Pancreas (tissue), 10 donors: ENCODE measurements at regions of chr3 and their contacts with region 1.

Region 1: GRCh38 chr3:153768561-153769469 is 352.4 kb upstream of the ARHGEF26 start:
- DNase-seq: peak in 4 of 6 donors; percentile 21 to 62 (median 34)
- ATAC-seq: peak; percentile 68 to 97 (median 90)
- H3K4me3 ChIP-seq: no peak overlapping the region
- H3K27ac ChIP-seq: no peak overlapping the region
- H3K4me1 ChIP-seq: no peaks in the 10 kb centered on the region
- H3K27me3 ChIP-seq: no peaks in the 10 kb centered on the region
- CTCF ChIP-seq: peak; percentile 35 to 79 (median 66)

Region 2: DNA sequence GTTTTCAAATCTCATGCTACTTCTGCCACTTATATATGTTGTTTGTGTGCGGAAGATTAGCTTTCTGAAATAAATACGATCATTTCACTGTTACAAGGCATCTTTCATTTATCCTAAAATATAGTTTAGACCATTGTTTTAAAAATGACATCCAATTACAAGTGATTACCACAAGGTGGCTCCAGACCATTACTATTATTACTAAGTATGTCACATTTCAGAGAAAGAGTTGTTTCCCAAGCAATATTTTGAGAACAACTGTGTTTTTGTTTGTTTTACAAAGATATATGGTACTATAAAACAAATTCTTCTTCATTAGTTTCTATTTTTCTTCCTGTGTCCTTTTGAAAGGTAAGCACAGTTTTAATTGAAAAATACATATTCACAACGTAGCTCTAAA is 742.8 kb before region 1 on chr3:
- intact Hi-C with region 1: loop called in 1 of 3 experiments (anchors 10 kb)
- DNase-seq: no peak
- ATAC-seq: peak in 1 of 4 donors; percentile 57
- H3K4me3 ChIP-seq: no peak overlapping the region
- H3K27ac ChIP-seq: no peak overlapping the region
- H3K4me1 ChIP-seq: no peaks in the 10 kb centered on the region
- H3K27me3 ChIP-seq: peaks cover 0 to 9% (median 0%) of the 10 kb centered on the region in 4 donors
- CTCF ChIP-seq: peak; percentile 13 to 41 (median 28)

Region 3: GRCh38 chr3:153043729-153044328 is 725.0 kb before region 1 on chr3:
- intact Hi-C with region 1: loop called in 2 of 3 experiments (anchors 5 to 10 kb)
- DNase-seq: no peak
- ATAC-seq: peak in 2 of 4 donors; percentile 42 to 43
- H3K4me3 ChIP-seq: no peak overlapping the region
- H3K27ac ChIP-seq: no peak overlapping the region
- H3K4me1 ChIP-seq: no peaks in the 10 kb centered on the region
- H3K27me3 ChIP-seq: no peaks in the 10 kb centered on the region
- CTCF ChIP-seq: no peak

Region 4: DNA sequence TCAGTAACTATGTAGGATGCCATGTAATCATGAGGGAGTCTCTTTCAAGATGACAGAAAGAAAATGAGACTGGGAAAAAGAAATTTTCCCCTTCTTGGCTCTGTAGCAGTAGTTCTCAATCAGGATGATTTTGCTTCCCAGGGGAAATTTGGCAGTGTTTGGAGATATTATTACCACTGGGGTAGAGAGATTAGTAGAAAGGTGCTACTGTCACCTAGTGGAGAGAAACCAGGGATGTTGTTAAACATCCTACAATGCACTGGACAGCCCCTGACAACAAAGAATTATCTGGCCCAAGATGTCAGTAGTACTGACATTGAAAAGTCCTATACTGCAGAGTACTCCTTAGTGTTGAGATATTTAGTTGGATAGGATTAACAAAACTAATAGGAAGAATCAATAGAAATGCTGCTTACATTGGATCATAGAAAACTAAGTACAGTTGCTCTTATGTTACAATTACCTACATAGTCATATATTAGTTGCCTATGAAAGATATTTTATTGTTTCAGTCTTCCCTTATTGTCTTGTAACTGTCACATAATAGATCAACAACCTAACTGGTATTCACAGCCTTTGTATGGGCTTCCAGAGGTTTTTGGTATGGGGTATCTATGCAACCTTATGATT is 173.5 kb before region 1 on chr3:
- intact Hi-C with region 1: no loop called
- DNase-seq: no peak
- ATAC-seq: peak in 3 of 4 donors; percentile 36 to 62 (median 52)
- H3K4me3 ChIP-seq: no peak overlapping the region
- H3K27ac ChIP-seq: no peak overlapping the region
- H3K4me1 ChIP-seq: no peaks in the 10 kb centered on the region
- H3K27me3 ChIP-seq: no peaks in the 10 kb centered on the region
- CTCF ChIP-seq: peak in 1 of 4 donors; percentile 19